HAP-1 (cell line): ENCODE measurements at regions of chr3 and their contacts with region 1.

Region 1: GRCh38 chr3:33883538-33883950 is 85.1 kb downstream of the PDCD6IP start:
- DNase-seq: peak; percentile 54 to 57
- H3K4me3 ChIP-seq: no peak overlapping the region
- H3K4me1 ChIP-seq: no peaks in the 10 kb centered on the region
- H3K27me3 ChIP-seq: peaks cover 3% of the 10 kb centered on the region; the same call in 1 of the 2 replicates

Region 2: DNA sequence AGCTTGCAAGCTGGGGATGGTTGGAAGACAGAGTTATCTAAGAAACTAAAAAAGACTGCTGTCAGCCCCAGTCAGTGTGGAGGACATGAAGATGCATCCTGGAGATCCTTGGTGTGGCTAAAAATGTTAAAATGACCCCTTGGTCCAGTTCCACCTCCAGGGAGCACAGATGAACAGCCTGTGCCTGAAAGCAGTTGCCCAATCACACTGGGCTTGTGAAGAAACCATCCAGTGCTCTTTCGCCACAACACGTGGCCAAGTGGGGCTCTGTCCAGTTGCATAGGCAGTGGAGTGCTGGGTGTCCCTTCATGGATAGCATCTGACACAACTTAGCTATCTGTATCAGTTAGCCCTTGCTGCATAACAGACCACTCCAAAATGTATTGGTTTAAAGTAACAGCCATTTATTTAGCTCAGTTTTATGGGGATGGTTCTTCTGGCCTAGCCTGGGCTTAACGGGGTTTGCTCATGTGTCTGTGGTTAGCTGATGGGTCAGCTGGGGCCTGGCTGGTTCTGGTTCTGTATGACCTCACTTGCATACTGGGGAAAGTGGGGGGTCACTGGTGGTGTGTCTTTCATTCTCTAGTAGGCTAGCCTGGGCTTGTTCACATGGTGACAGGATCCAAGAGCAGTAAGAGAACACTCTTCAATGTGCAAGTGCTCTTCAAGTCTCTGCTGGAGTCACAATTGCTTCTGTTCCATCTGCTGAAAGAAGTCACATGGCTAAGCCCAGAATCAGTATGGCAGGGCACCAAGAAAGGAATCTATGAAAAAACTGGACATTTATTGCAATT is 141.1 kb after region 1 on chr3:
- in situ Hi-C with region 1: loop called (anchors 5 kb)
- DNase-seq: no peak
- H3K4me3 ChIP-seq: no peak overlapping the region
- H3K4me1 ChIP-seq: no peaks in the 10 kb centered on the region
- H3K27me3 ChIP-seq: no peaks in the 10 kb centered on the region; the same call in 1 of the 2 replicates

Region 3: DNA sequence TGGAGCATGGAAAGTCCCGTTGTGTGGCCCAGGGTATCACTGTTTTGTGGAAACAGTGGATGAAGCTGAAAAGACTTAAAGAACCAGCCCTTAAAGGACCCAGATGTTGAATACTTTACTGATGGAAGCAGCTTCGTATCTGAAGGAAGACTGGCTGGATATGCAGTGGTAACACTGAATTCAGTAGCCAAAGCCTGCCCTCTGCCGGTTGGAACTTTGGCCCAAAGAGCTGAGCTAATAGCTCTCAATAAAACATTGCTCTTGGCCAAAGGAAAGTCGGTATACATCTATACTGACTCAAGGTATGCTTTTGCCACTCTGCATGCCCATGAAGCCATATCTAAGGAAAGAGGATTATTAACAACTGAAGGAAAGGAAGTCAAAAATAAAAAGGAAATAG is 800.3 kb after region 1 on chr3:
- in situ Hi-C with region 1: loop called (anchors 10 kb)
- DNase-seq: peak; percentile 37 to 75
- H3K4me3 ChIP-seq: no peak overlapping the region
- H3K4me1 ChIP-seq: no peaks in the 10 kb centered on the region
- H3K27me3 ChIP-seq: no peaks in the 10 kb centered on the region